Heart right ventricle (tissue), 16 donors: ENCODE measurements at regions of chr15 and their contacts with region 1.

Region 1: DNA sequence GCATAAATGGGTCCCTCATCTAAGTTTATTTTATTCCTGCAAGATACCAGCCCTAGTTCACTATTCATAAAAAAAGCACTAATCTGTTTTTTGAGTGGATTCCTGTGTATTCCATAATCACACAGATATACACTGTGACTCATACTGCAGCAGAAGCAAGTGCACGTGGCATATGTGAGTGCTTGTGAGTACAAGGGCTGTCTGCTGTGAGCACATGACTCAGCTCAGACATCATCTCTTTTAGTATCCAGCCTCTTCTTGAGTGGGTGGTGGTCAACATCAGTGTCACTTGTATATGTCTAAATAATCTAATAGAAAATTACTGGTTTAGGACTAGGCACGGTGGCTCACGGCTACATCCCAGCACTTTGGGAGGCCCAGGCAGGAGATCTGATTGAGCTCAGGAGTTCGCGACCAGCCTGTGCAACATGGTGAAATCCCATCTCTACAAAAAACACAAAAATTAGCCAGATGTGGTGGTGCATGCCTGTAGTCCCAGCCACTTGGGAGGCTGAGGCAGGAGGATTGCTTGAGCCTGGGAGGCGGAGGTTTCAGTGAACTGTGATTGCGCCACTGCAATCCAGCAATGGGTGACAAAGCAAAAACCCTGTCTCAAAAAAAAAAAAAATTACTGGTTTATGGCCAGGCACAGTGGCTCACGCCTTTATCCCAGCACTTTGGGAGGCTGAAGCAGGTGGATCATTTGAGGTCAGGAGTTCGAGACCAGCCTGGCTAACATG is 49.8 kb downstream of the NIPA2 start:
- DNase-seq: no peak
- ATAC-seq: peak in 7 of 8 donors; percentile 59 to 76 (median 63)
- H3K4me3 ChIP-seq: no peak overlapping the region
- H3K27ac ChIP-seq: peak overlapping the region in 1 of 10 donors; percentile 0
- H3K4me1 ChIP-seq: peaks cover 0 to 11% (median 0%) of the 10 kb centered on the region in 9 donors
- H3K27me3 ChIP-seq: no peaks in the 10 kb centered on the region
- CTCF ChIP-seq: no peak

Region 2: GRCh38 chr15:22868495-22868894 is 19.8 kb before region 1 on chr15:
- intact Hi-C with region 1: loop called in 1 of 10 experiments (anchors 2 kb)
- DNase-seq: no peak
- ATAC-seq: no peak
- H3K4me3 ChIP-seq: no peak overlapping the region
- H3K27ac ChIP-seq: no peak overlapping the region
- H3K4me1 ChIP-seq: peaks cover 0 to 28% (median 4%) of the 10 kb centered on the region in 9 donors
- H3K27me3 ChIP-seq: no peaks in the 10 kb centered on the region
- CTCF ChIP-seq: no peak

Region 3: DNA sequence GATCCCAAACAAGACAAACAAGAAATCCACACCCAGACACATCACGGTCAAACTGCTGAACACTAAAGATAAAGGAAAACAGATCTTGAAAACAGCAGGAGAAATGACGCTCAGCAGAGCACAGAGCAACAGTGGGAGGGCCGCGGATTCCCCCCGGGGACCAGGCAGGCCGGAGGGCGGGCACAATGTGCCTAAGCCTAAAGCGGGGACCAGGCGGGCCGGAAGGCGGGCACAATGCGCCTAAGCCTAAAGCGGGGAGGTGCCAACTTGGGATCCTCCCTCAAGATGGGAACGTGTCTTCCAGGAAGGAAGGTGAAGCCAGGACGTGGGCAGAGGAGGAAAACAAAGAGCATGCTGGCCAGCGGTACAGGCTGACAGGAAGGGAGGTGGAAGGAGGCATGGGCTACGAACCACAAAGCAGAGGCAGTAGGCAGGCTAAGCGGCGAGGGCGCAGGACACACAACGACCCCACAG is 60.8 kb after region 1 on chr15:
- intact Hi-C with region 1: loop called in 1 of 10 experiments (anchors 10 kb)
- DNase-seq: peak; percentile 74 to 84
- ATAC-seq: peak; percentile 65 to 88 (median 80)
- H3K4me3 ChIP-seq: peak overlapping the region in 6 of 10 donors; percentile 14 to 39 (median 32)
- H3K27ac ChIP-seq: peak overlapping the region in 9 of 10 donors; percentile 62 to 81 (median 66)
- H3K4me1 ChIP-seq: peaks cover 4 to 82% (median 64%) of the 10 kb centered on the region in 9 donors
- H3K27me3 ChIP-seq: no peaks in the 10 kb centered on the region
- CTCF ChIP-seq: no peak